H1 (cell line): ENCODE measurements at regions of chr2 and their contacts with region 1.

Region 1: DNA sequence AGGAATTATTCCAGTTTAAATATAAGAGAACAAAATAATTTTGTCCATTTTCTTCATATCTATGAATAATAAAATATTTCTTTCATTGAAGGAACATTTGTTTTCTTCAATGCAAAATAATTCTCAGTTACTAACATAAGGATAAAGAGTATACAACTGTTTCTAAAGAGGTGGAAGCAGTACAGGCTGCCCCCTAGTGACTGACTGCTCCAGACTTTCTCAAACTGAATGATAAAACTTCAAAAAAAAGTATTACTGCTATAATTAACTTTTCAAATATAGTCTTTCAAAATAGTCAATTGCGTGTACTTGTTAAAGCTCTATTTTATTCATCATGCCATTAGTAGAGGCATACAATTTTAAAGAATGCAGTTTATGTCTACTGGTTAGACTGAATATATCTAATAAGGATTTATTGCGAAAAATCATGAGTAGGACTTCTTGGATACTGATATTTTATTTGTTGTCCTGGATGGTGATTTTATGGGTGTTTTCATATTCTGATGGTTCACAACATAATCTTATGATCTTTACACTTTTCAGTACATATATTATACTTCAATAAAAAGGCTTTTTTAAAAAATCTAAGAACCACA is 100.1 kb downstream of the WDPCP start:
- DNase-seq: no peak
- H3K4me3 ChIP-seq: no peak overlapping the region
- H3K27ac ChIP-seq: no peak overlapping the region
- H3K4me1 ChIP-seq: peaks cover 0 to 6% (median 0%) of the 10 kb centered on the region in 4 experiments; a peak in 1 of 7 replicates
- H3K27me3 ChIP-seq: no peaks in the 10 kb centered on the region
- CTCF ChIP-seq: peak in 2 of 3 experiments; percentile 30 to 58; a peak in 2 of 4 replicates
- EP300 ChIP-seq: no peak
- POLR2A ChIP-seq: no peak
- RAD21 ChIP-seq: peak; percentile 60 to 61

Region 2: GRCh38 chr2:62939735-62940491 is 548.3 kb before region 1 on chr2:
- CTCF ChIA-PET with region 1: no interaction called
- POLR2A ChIA-PET with region 1: no interaction called
- DNase-seq: no peak
- H3K4me3 ChIP-seq: no peak overlapping the region
- H3K27ac ChIP-seq: no peak overlapping the region
- H3K4me1 ChIP-seq: no peaks in the 10 kb centered on the region
- H3K27me3 ChIP-seq: peaks cover 0 to 1% (median 0%) of the 10 kb centered on the region in 4 experiments; a peak in 1 of 7 replicates
- CTCF ChIP-seq: no peak
- EP300 ChIP-seq: no peak
- POLR2A ChIP-seq: no peak
- RAD21 ChIP-seq: no peak

Region 3: DNA sequence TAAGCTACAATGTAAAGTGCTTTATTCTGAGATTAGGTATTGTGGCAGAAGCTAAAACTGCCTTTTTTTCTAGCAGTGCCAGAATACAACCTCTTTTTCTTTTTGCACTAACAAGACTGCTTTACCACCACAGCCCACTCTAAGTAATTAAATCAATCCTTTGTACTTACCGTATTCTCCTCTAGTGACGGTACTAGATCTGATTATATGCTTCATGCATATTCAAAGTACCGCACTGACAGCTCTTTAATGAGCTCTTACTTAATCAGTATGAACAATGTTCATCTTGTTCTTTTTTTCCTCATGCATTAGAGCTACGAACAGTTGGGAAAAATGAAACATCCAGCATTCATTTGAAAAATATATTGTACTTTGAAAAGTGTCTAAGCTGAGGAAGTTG is 453.7 kb before region 1 on chr2:
- CTCF ChIA-PET with region 1: no interaction called
- POLR2A ChIA-PET with region 1: no interaction called
- DNase-seq: no peak
- H3K4me3 ChIP-seq: no peak overlapping the region
- H3K27ac ChIP-seq: no peak overlapping the region
- H3K4me1 ChIP-seq: no peaks in the 10 kb centered on the region
- H3K27me3 ChIP-seq: no peaks in the 10 kb centered on the region
- CTCF ChIP-seq: no peak
- EP300 ChIP-seq: no peak
- POLR2A ChIP-seq: no peak
- RAD21 ChIP-seq: no peak

Region 4: GRCh38 chr2:63374341-63374740 is 113.9 kb before region 1 on chr2:
- CTCF ChIA-PET with region 1: interaction called, 10 read pairs
- POLR2A ChIA-PET with region 1: no interaction called
- DNase-seq: no peak
- H3K4me3 ChIP-seq: no peak overlapping the region
- H3K27ac ChIP-seq: no peak overlapping the region
- H3K4me1 ChIP-seq: peaks cover 0 to 6% (median 0%) of the 10 kb centered on the region in 4 experiments; a peak in 2 of 7 replicates
- H3K27me3 ChIP-seq: no peaks in the 10 kb centered on the region
- CTCF ChIP-seq: no peak
- EP300 ChIP-seq: no peak
- POLR2A ChIP-seq: no peak
- RAD21 ChIP-seq: no peak

Region 5: DNA sequence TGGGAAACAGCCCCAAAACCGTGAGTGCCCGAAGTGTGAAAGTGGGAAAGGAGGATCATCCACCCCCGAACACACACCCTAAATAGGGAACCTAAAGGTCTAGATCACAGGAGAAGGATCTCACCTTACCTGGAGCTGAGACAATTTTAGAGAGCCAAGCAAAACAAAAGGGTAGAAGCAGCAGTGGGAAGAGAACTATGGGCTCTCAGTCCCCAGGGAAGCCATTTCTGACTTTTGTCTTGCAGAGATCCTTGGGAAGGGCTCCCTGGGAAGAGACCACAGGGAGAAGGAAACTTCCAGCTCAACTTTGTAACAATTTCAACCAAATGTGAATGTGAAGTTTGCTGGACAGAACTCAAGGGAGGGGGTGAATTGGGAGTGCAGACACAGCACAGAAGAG is 10.5 kb before region 1 on chr2:
- CTCF ChIA-PET with region 1: interaction called, 14 read pairs
- POLR2A ChIA-PET with region 1: no interaction called
- DNase-seq: no peak
- H3K4me3 ChIP-seq: no peak overlapping the region
- H3K27ac ChIP-seq: no peak overlapping the region
- H3K4me1 ChIP-seq: peaks cover 0 to 6% (median 0%) of the 10 kb centered on the region in 4 experiments; a peak in 1 of 7 replicates
- H3K27me3 ChIP-seq: no peaks in the 10 kb centered on the region
- CTCF ChIP-seq: no peak
- EP300 ChIP-seq: no peak
- POLR2A ChIP-seq: no peak
- RAD21 ChIP-seq: no peak

Region 6: GRCh38 chr2:63500398-63500797 is 12.2 kb after region 1 on chr2:
- CTCF ChIA-PET with region 1: interaction called, 26 read pairs
- POLR2A ChIA-PET with region 1: interaction called, 3 read pairs
- DNase-seq: no peak
- H3K4me3 ChIP-seq: no peak overlapping the region
- H3K27ac ChIP-seq: no peak overlapping the region
- H3K4me1 ChIP-seq: peaks cover 0 to 3% (median 1%) of the 10 kb centered on the region in 4 experiments; a peak in 2 of 7 replicates
- H3K27me3 ChIP-seq: no peaks in the 10 kb centered on the region
- CTCF ChIP-seq: no peak
- EP300 ChIP-seq: no peak
- POLR2A ChIP-seq: no peak
- RAD21 ChIP-seq: no peak

Region 7: GRCh38 chr2:63522950-63523349 is 34.7 kb after region 1 on chr2:
- CTCF ChIA-PET with region 1: no interaction called
- POLR2A ChIA-PET with region 1: no interaction called
- DNase-seq: no peak
- H3K4me3 ChIP-seq: no peak overlapping the region
- H3K27ac ChIP-seq: no peak overlapping the region
- H3K4me1 ChIP-seq: no peaks in the 10 kb centered on the region
- H3K27me3 ChIP-seq: no peaks in the 10 kb centered on the region
- CTCF ChIP-seq: no peak
- EP300 ChIP-seq: no peak
- POLR2A ChIP-seq: no peak
- RAD21 ChIP-seq: no peak

Region 8: DNA sequence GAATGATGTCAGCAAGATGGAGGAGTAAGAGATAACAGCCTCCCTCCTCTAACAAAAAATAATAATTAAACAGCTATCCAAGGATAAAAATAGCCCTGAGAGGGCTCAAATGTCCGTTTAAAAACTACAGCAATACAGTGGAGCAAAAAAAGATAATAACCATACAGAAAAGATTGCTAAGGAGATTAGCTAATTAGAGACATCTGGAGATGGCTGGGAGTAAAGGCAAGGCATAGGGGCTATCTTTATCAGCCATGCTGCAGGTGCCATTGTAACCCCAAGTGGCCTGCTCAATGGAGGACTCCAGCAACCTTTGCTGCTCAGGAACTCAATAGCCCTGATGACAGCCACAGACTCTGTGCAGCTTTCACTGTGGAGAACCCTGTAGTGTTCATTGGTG is 143.3 kb after region 1 on chr2:
- CTCF ChIA-PET with region 1: no interaction called
- POLR2A ChIA-PET with region 1: no interaction called
- DNase-seq: no peak
- H3K4me3 ChIP-seq: no peak overlapping the region
- H3K27ac ChIP-seq: no peak overlapping the region
- H3K4me1 ChIP-seq: no peaks in the 10 kb centered on the region
- H3K27me3 ChIP-seq: no peaks in the 10 kb centered on the region
- CTCF ChIP-seq: no peak
- EP300 ChIP-seq: no peak
- POLR2A ChIP-seq: no peak
- RAD21 ChIP-seq: no peak